ENCODE measurements at regions of chr4 and their contacts with region 1.

Region 1: DNA sequence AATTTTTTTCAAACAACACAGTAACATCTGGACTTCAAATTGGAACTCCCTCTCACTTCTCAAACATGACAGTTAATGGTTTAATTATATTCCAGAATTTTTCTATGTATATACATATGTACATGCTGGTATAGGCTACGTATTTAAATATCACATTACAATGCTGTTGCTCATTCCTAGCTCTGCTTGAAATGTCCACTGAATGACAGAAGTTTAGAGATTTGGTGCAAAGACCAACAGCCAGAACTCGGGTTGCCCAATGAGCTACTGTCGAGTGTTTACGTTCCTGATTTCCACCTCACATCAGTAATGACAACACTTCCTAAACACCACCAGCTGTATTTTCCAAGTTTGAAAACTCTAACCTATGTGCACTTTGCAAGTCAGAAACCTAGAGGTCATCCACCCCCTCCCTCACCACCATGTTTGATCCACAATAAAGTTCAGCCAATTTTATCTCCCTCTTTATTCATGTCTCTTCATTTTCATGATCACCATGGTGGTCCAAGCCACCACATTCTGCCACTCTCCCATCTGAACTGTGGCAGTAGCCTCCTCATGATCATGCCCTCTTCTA is 49.3 kb upstream of the RPL34 start:
- DNase-seq: no peak
- ATAC-seq: no peak
- H3K4me3 Mint-ChIP-seq: no peak overlapping the region
- H3K27ac Mint-ChIP-seq: no peak overlapping the region
- H3K4me1 Mint-ChIP-seq: peaks cover 20% of the 10 kb centered on the region
- H3K27me3 Mint-ChIP-seq: no peaks in the 10 kb centered on the region

Region 2: DNA sequence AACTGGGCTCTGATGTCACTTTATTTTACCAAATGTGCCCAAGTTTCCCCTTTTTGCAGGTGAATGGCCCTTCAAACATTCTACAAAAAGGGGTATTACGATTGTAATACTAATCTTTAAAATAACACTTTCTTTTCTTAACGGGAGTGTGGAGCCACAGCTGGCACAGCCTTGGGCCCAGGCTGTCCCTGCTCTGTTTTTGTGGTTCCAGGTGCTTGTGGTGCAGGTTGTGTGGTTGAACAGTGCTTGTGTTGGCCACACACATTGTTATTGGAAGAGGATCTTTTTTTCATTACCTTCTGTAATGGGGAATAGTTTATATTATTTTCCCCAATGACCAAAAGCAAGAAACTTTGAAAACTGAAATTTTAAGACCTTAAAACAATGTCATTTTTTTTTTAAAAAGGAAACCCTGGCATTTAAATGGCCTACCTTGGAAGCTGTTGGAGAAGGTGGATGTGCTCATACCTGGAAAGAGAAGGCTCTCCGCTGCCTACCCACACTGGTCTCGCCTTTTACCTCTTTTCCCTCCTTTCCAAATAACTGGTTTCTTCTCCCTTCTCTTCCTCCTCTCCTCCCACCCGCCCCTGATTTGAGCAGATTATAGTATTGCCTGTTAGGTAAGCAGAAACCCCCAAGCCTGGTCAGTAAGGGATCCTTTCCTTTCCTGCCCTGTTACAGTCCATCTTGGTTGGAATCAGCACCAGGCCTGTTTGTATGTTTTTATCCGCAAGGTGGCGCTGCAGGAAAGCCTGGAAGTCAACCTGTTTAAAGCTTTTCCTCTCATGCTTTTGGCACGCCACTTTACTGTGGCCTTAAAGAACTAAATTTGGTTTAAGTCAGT is 552.8 kb before region 1 on chr4:
- CTCF ChIA-PET with region 1: interaction called, 77 read pairs
- POLR2A ChIA-PET with region 1: interaction called, 3 read pairs
- DNase-seq: peak; percentile 90
- ATAC-seq: peak; percentile 68
- H3K4me3 Mint-ChIP-seq: no peak overlapping the region
- H3K27ac Mint-ChIP-seq: peak overlapping the region; percentile 58
- H3K4me1 Mint-ChIP-seq: peaks cover 33% of the 10 kb centered on the region
- H3K27me3 Mint-ChIP-seq: no peaks in the 10 kb centered on the region

Region 3: GRCh38 chr4:108155373-108155772 is 415.7 kb before region 1 on chr4:
- CTCF ChIA-PET with region 1: interaction called, 23 read pairs
- POLR2A ChIA-PET with region 1: no interaction called
- DNase-seq: peak; percentile 59
- ATAC-seq: peak; percentile 50
- H3K4me3 Mint-ChIP-seq: peak overlapping the region; percentile 53
- H3K27ac Mint-ChIP-seq: peak overlapping the region; percentile 31
- H3K4me1 Mint-ChIP-seq: peaks cover 83% of the 10 kb centered on the region
- H3K27me3 Mint-ChIP-seq: no peaks in the 10 kb centered on the region

Region 4: GRCh38 chr4:108483079-108483478 is 88.0 kb before region 1 on chr4:
- CTCF ChIA-PET with region 1: interaction called, 10 read pairs
- POLR2A ChIA-PET with region 1: no interaction called
- DNase-seq: peak; percentile 74
- ATAC-seq: peak; percentile 89
- H3K4me3 Mint-ChIP-seq: peak overlapping the region; percentile 56
- H3K27ac Mint-ChIP-seq: peak overlapping the region; percentile 87
- H3K4me1 Mint-ChIP-seq: peaks cover 35% of the 10 kb centered on the region
- H3K27me3 Mint-ChIP-seq: no peaks in the 10 kb centered on the region

Region 5: GRCh38 chr4:108527723-108528122 is 43.4 kb before region 1 on chr4:
- CTCF ChIA-PET with region 1: interaction called, 31 read pairs
- POLR2A ChIA-PET with region 1: no interaction called
- DNase-seq: peak; percentile 75
- ATAC-seq: peak; percentile 89
- H3K4me3 Mint-ChIP-seq: peak overlapping the region; percentile 29
- H3K27ac Mint-ChIP-seq: peak overlapping the region; percentile 83
- H3K4me1 Mint-ChIP-seq: peaks cover 75% of the 10 kb centered on the region
- H3K27me3 Mint-ChIP-seq: no peaks in the 10 kb centered on the region

Region 6: DNA sequence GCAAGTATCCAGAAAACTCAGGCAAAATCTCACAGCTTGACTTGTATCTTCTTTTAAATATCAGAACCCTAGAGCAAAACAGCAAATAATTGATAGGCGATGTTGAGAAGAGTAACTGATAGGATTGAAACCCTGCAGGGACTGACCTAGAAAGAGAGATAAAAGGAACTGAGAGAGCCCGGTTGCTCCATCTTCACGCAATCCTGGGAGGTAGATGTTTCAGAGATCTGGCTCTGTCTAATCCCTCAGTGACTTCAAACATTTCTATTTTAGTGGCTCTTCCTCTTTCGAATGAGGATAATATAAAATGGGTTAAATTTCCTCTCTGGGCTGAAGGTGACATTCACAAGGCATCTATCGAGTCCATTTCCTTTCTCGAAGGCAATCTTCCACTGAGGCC is 10.0 kb after region 1 on chr4:
- CTCF ChIA-PET with region 1: interaction called, 29 read pairs
- POLR2A ChIA-PET with region 1: no interaction called
- DNase-seq: no peak
- ATAC-seq: no peak
- H3K4me3 Mint-ChIP-seq: no peak overlapping the region
- H3K27ac Mint-ChIP-seq: no peak overlapping the region
- H3K4me1 Mint-ChIP-seq: peaks cover 6% of the 10 kb centered on the region
- H3K27me3 Mint-ChIP-seq: no peaks in the 10 kb centered on the region

Region 7: GRCh38 chr4:108628411-108628810 is 57.3 kb after region 1 on chr4:
- CTCF ChIA-PET with region 1: no interaction called
- POLR2A ChIA-PET with region 1: no interaction called
- DNase-seq: no peak
- ATAC-seq: no peak
- H3K4me3 Mint-ChIP-seq: no peak overlapping the region
- H3K27ac Mint-ChIP-seq: no peak overlapping the region
- H3K4me1 Mint-ChIP-seq: peaks cover 16% of the 10 kb centered on the region
- H3K27me3 Mint-ChIP-seq: no peaks in the 10 kb centered on the region

Region 8: GRCh38 chr4:108787106-108787505 is 216.0 kb after region 1 on chr4:
- CTCF ChIA-PET with region 1: no interaction called
- POLR2A ChIA-PET with region 1: no interaction called
- DNase-seq: no peak
- ATAC-seq: no peak
- H3K4me3 Mint-ChIP-seq: no peak overlapping the region
- H3K27ac Mint-ChIP-seq: no peak overlapping the region
- H3K4me1 Mint-ChIP-seq: no peaks in the 10 kb centered on the region
- H3K27me3 Mint-ChIP-seq: peaks cover 6% of the 10 kb centered on the region

Region 9: GRCh38 chr4:108849611-108850168 is 278.6 kb after region 1 on chr4:
- CTCF ChIA-PET with region 1: no interaction called
- POLR2A ChIA-PET with region 1: no interaction called
- DNase-seq: peak; percentile 41
- ATAC-seq: peak; percentile 57
- H3K4me3 Mint-ChIP-seq: peak overlapping the region; percentile 5
- H3K27ac Mint-ChIP-seq: peak overlapping the region; percentile 45
- H3K4me1 Mint-ChIP-seq: peaks cover 36% of the 10 kb centered on the region
- H3K27me3 Mint-ChIP-seq: peaks cover 3% of the 10 kb centered on the region

Measured in activated CD8-positive, alpha-beta T cell treated with anti-CD3 and anti-CD28 coated beads, Interleukin-2, amount 10 ng/mL, durations not matched to agents 7 days and 5 days (primary cell).